ENCODE measurements at regions of chr21 and their contacts with region 1.

Region 1: DNA sequence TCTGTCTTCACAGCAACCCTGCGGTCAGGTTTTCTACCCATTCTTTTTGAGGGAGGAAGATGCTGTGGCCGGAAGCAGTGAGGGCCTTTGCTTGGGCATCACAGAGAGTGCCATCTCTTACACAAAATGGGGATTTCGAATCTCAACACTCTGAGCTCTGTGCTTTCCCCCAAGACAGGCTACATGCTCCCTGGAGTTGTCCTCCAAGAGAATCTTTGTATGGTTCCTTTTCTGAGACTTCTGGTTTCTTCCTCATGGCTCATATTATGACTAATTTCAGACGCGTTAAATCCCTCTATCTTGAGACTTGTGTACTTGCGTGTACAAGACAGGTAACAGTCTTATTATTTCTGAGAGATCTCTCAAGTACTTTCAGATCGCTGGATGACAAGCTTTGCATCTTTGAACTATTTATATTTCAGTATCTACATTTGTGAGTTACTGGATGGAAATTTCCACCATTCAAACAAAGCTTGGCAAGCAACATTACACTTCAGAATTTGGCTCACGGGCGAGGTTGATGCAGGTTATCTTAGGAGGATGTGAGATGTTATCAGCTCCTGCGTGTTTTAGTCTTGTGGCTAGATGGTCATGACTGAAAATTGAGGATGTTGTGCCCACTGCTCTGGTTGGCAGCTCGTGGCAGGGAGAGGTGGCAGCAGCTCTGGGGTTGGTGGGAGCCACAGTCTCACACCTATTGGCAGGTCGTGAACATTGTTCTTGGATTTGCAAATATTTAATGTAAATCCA is 19.4 kb downstream of the ABCG1 start:
- DNase-seq: peak in 7 of 9 experiments; percentile 16 to 88 (median 61)
- ATAC-seq: peak; percentile 29
- H3K4me3 ChIP-seq: no peak overlapping the region
- H3K4me3 Mint-ChIP-seq: peak overlapping the region; percentile 63
- H3K27ac ChIP-seq: peak overlapping the region; percentile 45 to 83
- H3K27ac Mint-ChIP-seq: peak overlapping the region; percentile 93
- H3K4me1 ChIP-seq: peaks cover 62% of the 10 kb centered on the region
- H3K4me1 Mint-ChIP-seq: peaks cover 73% of the 10 kb centered on the region
- H3K27me3 ChIP-seq: no peaks in the 10 kb centered on the region
- H3K27me3 Mint-ChIP-seq: no peaks in the 10 kb centered on the region
- CTCF ChIP-seq: no peak

Region 2: DNA sequence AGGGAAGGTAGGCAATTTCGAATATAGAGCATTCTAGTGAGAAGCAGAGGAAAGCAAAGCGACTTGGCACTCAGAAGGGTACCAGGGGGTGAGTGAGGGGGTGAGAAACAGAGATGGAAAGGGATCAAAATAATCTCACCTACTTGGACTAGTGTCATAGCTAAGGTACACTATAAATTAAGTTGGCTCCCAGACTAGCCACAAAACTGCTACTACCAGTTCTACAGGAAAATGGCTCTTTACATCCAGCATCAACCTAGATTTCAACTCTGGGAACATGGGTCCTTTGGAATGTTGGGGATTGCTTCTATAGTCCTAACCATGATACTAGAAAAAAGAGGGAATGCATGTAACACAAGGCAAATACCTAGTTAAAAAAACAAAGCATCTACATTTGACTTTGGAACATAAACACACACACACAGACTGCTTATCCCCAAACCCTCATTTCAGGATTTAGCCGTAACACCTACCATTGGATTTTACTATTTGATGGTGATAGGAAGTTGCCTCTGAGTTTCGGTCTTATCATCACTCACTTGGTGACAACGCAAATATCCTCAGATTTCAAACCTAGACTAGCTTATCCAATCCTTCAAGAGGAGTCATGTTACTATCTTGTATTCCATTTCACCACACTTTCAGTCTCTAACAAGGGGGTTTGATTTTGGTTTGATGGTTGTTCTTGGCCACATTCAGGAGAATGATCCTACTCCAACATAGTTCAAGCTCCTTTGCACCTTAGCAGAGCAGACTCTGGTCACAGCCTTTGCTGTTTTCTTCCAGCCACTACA is 233.8 kb before region 1 on chr21:
- CTCF ChIA-PET with region 1: no interaction called
- POLR2A ChIA-PET with region 1: no interaction called
- intact Hi-C with region 1: no loop called
- DNase-seq: no peak
- ATAC-seq: no peak
- H3K4me3 ChIP-seq: no peak overlapping the region
- H3K4me3 Mint-ChIP-seq: no peak overlapping the region
- H3K27ac ChIP-seq: no peak overlapping the region
- H3K27ac Mint-ChIP-seq: no peak overlapping the region
- H3K4me1 ChIP-seq: no peaks in the 10 kb centered on the region
- H3K4me1 Mint-ChIP-seq: peaks cover 41% of the 10 kb centered on the region
- H3K27me3 ChIP-seq: no peaks in the 10 kb centered on the region
- H3K27me3 Mint-ChIP-seq: no peaks in the 10 kb centered on the region
- CTCF ChIP-seq: no peak

Region 3: GRCh38 chr21:42093991-42094421 is 144.4 kb before region 1 on chr21:
- CTCF ChIA-PET with region 1: no interaction called
- POLR2A ChIA-PET with region 1: no interaction called
- intact Hi-C with region 1: no loop called
- DNase-seq: no peak
- ATAC-seq: no peak
- H3K4me3 ChIP-seq: no peak overlapping the region
- H3K4me3 Mint-ChIP-seq: no peak overlapping the region
- H3K27ac ChIP-seq: no peak overlapping the region
- H3K27ac Mint-ChIP-seq: no peak overlapping the region
- H3K4me1 ChIP-seq: peaks cover 9% of the 10 kb centered on the region
- H3K4me1 Mint-ChIP-seq: peaks cover 7% of the 10 kb centered on the region
- H3K27me3 ChIP-seq: no peaks in the 10 kb centered on the region
- H3K27me3 Mint-ChIP-seq: no peaks in the 10 kb centered on the region
- CTCF ChIP-seq: no peak

Region 4: GRCh38 chr21:42227909-42228708 is 10.3 kb before region 1 on chr21:
- CTCF ChIA-PET with region 1: interaction called, 12 read pairs
- POLR2A ChIA-PET with region 1: interaction called, 3 read pairs
- intact Hi-C with region 1: loop called in 1 of 2 experiments (anchors 1 kb)
- DNase-seq: peak; percentile 79 to 99 (median 90)
- ATAC-seq: peak; percentile 87
- H3K4me3 ChIP-seq: peak overlapping the region in 1 of 2 experiments; percentile 11
- H3K4me3 Mint-ChIP-seq: peak overlapping the region; percentile 47
- H3K27ac ChIP-seq: peak overlapping the region; percentile 54 to 90
- H3K27ac Mint-ChIP-seq: peak overlapping the region; percentile 95
- H3K4me1 ChIP-seq: peaks cover 46% of the 10 kb centered on the region
- H3K4me1 Mint-ChIP-seq: peaks cover 83% of the 10 kb centered on the region
- H3K27me3 ChIP-seq: no peaks in the 10 kb centered on the region
- H3K27me3 Mint-ChIP-seq: no peaks in the 10 kb centered on the region
- CTCF ChIP-seq: no peak

Region 5: GRCh38 chr21:42248783-42249597 is 10.6 kb after region 1 on chr21:
- CTCF ChIA-PET with region 1: interaction called, 4 read pairs
- POLR2A ChIA-PET with region 1: interaction called, 6 read pairs
- intact Hi-C with region 1: loop called in 1 of 2 experiments (anchors 2 kb)
- DNase-seq: no peak
- ATAC-seq: no peak
- H3K4me3 ChIP-seq: no peak overlapping the region
- H3K4me3 Mint-ChIP-seq: no peak overlapping the region
- H3K27ac ChIP-seq: no peak overlapping the region
- H3K27ac Mint-ChIP-seq: peak overlapping the region; percentile 6
- H3K4me1 ChIP-seq: peaks cover 7% of the 10 kb centered on the region
- H3K4me1 Mint-ChIP-seq: peaks cover 31% of the 10 kb centered on the region
- H3K27me3 ChIP-seq: no peaks in the 10 kb centered on the region
- H3K27me3 Mint-ChIP-seq: no peaks in the 10 kb centered on the region
- CTCF ChIP-seq: no peak